ENCODE measurements at regions of chr9 and their contacts with region 1.

Region 1: GRCh38 chr9:22469928-22470544 is 23.4 kb downstream of the DMRTA1 start:
- DNase-seq: no peak
- ATAC-seq: no peak
- H3K4me3 ChIP-seq: no peak overlapping the region
- H3K27ac ChIP-seq: no peak overlapping the region
- H3K4me1 ChIP-seq: no peaks in the 10 kb centered on the region
- H3K27me3 ChIP-seq: no peaks in the 10 kb centered on the region
- CTCF ChIP-seq: peak; percentile 65

Region 2: DNA sequence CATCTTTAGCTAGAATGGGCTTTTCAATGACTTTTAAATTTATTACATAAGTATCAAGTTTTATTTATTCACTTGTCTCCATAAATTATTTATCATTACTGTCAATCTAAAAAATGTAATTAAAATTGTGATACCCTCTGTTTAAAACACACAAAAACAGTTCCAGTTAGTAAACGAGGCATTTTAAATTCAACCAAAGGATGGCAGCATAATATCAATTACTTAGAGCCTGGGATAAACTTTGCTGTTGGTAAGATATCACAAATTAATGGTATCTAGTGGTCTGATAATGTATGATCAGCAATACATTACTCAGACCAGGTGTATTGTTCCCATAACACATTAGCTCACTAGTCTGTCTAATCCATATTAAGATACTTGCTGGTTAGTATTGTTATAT is 978.3 kb before region 1 on chr9:
- CTCF ChIA-PET with region 1: no interaction called
- POLR2A ChIA-PET with region 1: no interaction called
- in situ Hi-C with region 1: no loop called
- intact Hi-C with region 1: no loop called
- DNase-seq: no peak
- ATAC-seq: no peak
- H3K4me3 ChIP-seq: no peak overlapping the region
- H3K27ac ChIP-seq: no peak overlapping the region
- H3K4me1 ChIP-seq: no peaks in the 10 kb centered on the region
- H3K27me3 ChIP-seq: no peaks in the 10 kb centered on the region
- CTCF ChIP-seq: no peak

Region 3: GRCh38 chr9:22483528-22484070 is 13.6 kb after region 1 on chr9:
- CTCF ChIA-PET with region 1: interaction called, 13 read pairs
- POLR2A ChIA-PET with region 1: no interaction called
- in situ Hi-C with region 1: no loop called
- intact Hi-C with region 1: no loop called
- DNase-seq: no peak
- ATAC-seq: no peak
- H3K4me3 ChIP-seq: no peak overlapping the region
- H3K27ac ChIP-seq: no peak overlapping the region
- H3K4me1 ChIP-seq: no peaks in the 10 kb centered on the region
- H3K27me3 ChIP-seq: no peaks in the 10 kb centered on the region
- CTCF ChIP-seq: no peak

Measured in Panc1 (cell line).